ENCODE measurements at regions of chr3 and their contacts with region 1.

Region 1: DNA sequence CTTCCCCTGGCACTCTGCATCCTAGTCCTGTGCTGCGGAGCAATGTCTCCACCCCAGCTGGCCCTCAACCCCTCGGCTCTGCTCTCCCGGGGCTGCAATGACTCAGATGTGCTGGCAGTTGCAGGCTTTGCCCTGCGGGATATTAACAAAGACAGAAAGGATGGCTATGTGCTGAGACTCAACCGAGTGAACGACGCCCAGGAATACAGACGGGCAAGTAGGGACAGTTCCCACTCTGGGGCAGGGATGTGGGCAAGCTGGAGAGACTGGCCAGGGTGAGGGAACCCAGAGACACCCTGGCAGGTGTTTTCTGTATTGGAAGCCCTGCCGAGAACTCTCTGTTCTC is 247 bp downstream of the FETUB start:
- DNase-seq: no peak
- H3K4me3 Mint-ChIP-seq: no peak overlapping the region
- H3K27ac Mint-ChIP-seq: no peak overlapping the region
- H3K4me1 Mint-ChIP-seq: peaks cover 45% of the 10 kb centered on the region
- H3K27me3 Mint-ChIP-seq: peaks cover 12% of the 10 kb centered on the region

Region 2: GRCh38 chr3:186653080-186653707 is 12.7 kb after region 1 on chr3:
- intact Hi-C with region 1: loop called (anchors 2 kb)
- DNase-seq: no peak
- H3K4me3 Mint-ChIP-seq: no peak overlapping the region
- H3K27ac Mint-ChIP-seq: no peak overlapping the region
- H3K4me1 Mint-ChIP-seq: peaks cover 5% of the 10 kb centered on the region
- H3K27me3 Mint-ChIP-seq: peaks cover 8% of the 10 kb centered on the region

Region 3: GRCh38 chr3:186705882-186706780 is 65.7 kb after region 1 on chr3:
- intact Hi-C with region 1: loop called (anchors 5 kb)
- DNase-seq: peak; percentile 48
- H3K4me3 Mint-ChIP-seq: no peak overlapping the region
- H3K27ac Mint-ChIP-seq: peak overlapping the region; percentile 15
- H3K4me1 Mint-ChIP-seq: peaks cover 11% of the 10 kb centered on the region
- H3K27me3 Mint-ChIP-seq: peaks cover 32% of the 10 kb centered on the region